ENCODE measurements at regions of chr20 and their contacts with region 1.

Region 1: DNA sequence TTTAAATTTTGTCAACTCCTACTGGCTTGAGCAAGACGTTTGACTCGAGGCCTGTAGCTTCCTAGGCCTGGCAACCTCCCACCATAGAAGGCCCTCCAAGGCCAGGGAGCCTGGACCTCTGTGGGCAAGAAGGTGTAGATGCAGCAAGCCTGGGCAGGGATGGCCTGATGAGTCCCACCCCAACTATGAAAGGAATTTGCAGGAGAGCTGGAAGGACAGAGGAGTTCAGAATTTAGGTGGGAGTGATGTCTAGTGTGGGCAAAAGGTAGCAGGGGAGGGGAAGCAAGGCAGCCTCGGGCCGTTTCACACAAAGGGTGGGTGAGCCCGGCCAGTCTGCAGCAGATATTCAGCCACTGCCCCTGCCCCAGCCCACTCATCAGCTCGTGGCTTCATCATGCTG is 245.2 kb downstream of the CDH26 start:
- DNase-seq: no peak
- ATAC-seq: no peak

Region 2: DNA sequence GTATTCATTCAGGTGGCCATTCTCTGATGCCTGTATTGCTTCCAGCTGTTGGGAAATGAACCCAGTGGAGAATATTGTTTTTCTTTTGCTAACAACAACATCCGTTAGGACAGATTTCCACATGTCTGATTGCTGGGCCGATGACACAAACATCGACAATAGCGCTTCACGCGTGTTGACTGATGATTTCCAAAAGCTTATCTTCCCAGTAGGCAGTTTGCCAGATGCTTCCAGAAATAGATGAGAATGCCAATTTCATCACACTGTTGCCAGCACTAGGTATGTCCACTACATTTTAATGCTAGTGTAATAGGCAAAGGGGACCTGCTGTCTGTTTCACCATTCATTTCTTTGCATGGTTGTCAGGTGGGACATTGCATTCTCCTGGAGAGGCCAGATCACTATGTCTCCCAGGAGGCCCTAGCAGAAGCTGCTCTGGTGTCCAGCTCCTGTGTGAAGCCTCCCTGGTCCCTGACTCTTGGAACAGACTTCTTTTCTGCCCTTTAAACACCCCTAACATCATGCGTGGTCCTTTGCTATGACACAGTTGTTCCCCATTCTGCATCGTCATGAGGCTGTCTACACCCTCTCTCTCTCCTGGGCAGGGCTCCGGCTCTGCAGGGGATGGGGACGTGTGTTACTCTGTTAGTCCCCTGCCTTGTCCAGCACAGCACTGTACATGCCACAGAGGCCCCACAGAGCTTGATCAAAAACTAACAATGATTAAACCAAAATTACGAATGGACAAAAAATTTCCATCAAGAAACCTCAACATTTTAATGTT is 63.6 kb before region 1 on chr20:
- intact Hi-C with region 1: loop called (anchors 5 kb)
- DNase-seq: no peak
- ATAC-seq: peak; percentile 71

Measured in Right ventricle myocardium superior (tissue), 1 donor.